IMR-90 (cell line): ENCODE measurements at regions of chr13 and their contacts with region 1.

Region 1: GRCh38 chr13:52128714-52129700 is at the start of gene NEK5:
- DNase-seq: peak; percentile 25
- ATAC-seq: peak; percentile 93
- H3K4me3 ChIP-seq: peak within 1 kb of the TSS; percentile 54
- H3K27ac ChIP-seq: no peak within 1 kb of the TSS
- H3K4me1 ChIP-seq: no peaks in the 10 kb centered on the region
- H3K27me3 ChIP-seq: peaks cover 2% of the 10 kb centered on the region; the same call in 1 of the 2 replicates
- CTCF ChIP-seq: peak; percentile 71
- POLR2A ChIP-seq: no peak
- RAD21 ChIP-seq: peak; percentile 55
- total RNA-seq, gene NEK5: under 0.01 TPM in 1 of 2 replicates, not detected in the other

Region 2: DNA sequence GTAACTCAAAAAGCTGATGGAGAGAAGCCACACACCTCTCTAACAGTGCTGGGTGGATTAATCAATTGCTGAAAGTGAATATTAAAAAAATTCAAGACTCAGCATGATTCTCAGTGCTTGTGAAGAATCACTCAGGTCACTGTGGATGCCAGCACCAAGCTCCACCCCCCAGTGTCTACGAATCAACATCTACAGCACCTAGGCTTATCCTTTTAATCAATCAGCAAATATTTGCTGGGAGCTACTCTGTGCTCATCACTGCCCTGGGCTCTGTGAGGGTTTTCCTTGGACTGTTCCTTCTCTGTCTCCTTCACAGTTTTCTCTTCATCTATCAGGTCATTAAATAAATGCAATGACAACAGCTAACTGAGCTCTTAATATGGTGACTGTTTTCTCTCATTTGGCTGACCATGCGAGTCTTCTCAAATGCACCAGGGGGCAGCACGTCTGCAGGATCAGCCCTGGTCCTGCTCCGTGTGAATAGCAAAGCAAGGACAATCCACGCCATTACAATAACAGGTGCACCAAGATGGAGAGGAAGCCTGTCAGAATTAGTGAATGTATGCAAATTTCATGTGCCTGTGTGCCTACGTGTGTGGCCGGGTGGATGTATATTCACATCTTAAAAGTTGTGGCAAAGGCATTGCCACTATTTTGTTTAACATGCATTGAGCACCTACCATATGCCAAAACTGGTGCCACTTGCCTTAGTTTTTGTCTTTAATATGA is 1003.3 kb before region 1 on chr13:
- CTCF ChIA-PET with region 1: no interaction called
- POLR2A ChIA-PET with region 1: no interaction called
- dilution Hi-C with region 1: no loop called
- in situ Hi-C with region 1: loop called (anchors 25 kb)
- intact Hi-C with region 1: loop called (anchors 1 kb)
- DNase-seq: peak; percentile 54
- ATAC-seq: peak; percentile 90
- H3K4me3 ChIP-seq: no peak overlapping the region
- H3K27ac ChIP-seq: no peak overlapping the region
- H3K4me1 ChIP-seq: no peaks in the 10 kb centered on the region
- H3K27me3 ChIP-seq: peaks cover 2% of the 10 kb centered on the region; the same call in 1 of the 2 replicates
- CTCF ChIP-seq: peak; percentile 72
- POLR2A ChIP-seq: no peak
- RAD21 ChIP-seq: peak; percentile 77

Region 3: GRCh38 chr13:51425410-51426042 is 703.5 kb before region 1 on chr13:
- CTCF ChIA-PET with region 1: no interaction called
- POLR2A ChIA-PET with region 1: no interaction called
- dilution Hi-C with region 1: no loop called
- in situ Hi-C with region 1: loop called (anchors 25 kb)
- intact Hi-C with region 1: loop called (anchors 5 kb)
- DNase-seq: peak; percentile 60
- ATAC-seq: peak; percentile 72
- H3K4me3 ChIP-seq: no peak overlapping the region
- H3K27ac ChIP-seq: no peak overlapping the region
- H3K4me1 ChIP-seq: peaks cover 2% of the 10 kb centered on the region
- H3K27me3 ChIP-seq: no peaks in the 10 kb centered on the region
- CTCF ChIP-seq: no peak
- POLR2A ChIP-seq: no peak
- RAD21 ChIP-seq: no peak

Region 4: DNA sequence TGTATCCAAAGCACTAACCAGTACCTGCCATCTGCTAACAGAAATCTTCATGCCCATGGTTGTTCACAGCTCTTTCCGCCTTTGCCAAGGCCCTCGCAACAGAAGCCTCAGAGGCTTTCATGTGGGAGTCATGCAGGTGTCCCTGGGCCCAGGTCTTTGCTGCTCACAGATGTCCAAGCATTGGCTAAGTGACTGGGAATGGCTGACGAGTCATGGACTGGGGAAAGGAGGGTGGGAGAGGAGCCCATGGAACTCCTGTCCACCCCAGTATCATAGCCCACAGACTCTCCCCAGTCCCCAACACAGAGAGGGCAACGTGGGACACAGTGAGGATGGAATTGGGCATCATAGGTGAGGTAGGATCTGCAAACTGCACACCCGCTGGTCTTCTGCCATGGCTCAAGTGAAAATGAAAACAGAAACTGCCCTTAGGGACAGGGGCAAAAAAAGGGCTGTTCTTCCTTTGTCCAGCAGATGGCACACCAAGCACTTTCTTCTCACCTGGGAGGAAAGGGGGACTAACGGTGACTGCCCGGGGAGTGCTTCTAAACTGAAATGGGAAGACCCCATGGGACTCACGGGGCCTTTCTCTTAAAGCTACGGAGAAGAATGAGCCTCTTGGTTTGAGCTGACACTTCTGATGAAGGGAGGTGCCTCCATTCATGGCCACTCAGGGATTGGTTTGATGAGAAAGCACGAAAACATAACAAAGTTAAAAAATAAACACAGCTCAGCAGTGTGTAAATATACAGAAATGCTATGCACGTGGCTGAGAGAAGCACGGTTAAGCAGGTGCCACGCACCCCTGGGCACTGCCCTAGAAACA is 314.0 kb before region 1 on chr13:
- CTCF ChIA-PET with region 1: interaction called, 6 read pairs
- POLR2A ChIA-PET with region 1: no interaction called
- dilution Hi-C with region 1: no loop called
- in situ Hi-C with region 1: loop called (anchors 10 kb)
- intact Hi-C with region 1: loop called (anchors 1 kb)
- DNase-seq: peak; percentile 50
- ATAC-seq: peak; percentile 86
- H3K4me3 ChIP-seq: peak overlapping the region; percentile 30
- H3K27ac ChIP-seq: no peak overlapping the region
- H3K4me1 ChIP-seq: no peaks in the 10 kb centered on the region
- H3K27me3 ChIP-seq: peaks cover 40% of the 10 kb centered on the region
- CTCF ChIP-seq: peak; percentile 79
- POLR2A ChIP-seq: no peak
- RAD21 ChIP-seq: peak; percentile 64

Region 5: GRCh38 chr13:51844862-51845573 is 284.0 kb before region 1 on chr13 and contains the start of gene TMEM272:
- CTCF ChIA-PET with region 1: no interaction called
- POLR2A ChIA-PET with region 1: no interaction called
- dilution Hi-C with region 1: no loop called
- in situ Hi-C with region 1: no loop called
- intact Hi-C with region 1: loop called (anchors 1 kb)
- DNase-seq: peak; percentile 11
- ATAC-seq: peak; percentile 95
- H3K4me3 ChIP-seq: no peak within 1 kb of the TSS
- H3K27ac ChIP-seq: no peak within 1 kb of the TSS
- H3K4me1 ChIP-seq: peaks cover 2% of the 10 kb centered on the region
- H3K27me3 ChIP-seq: peaks cover 28% of the 10 kb centered on the region
- CTCF ChIP-seq: peak; percentile 65
- POLR2A ChIP-seq: no peak
- RAD21 ChIP-seq: peak; percentile 44
- total RNA-seq, gene TMEM272: not detected in 2 replicates

Region 6: DNA sequence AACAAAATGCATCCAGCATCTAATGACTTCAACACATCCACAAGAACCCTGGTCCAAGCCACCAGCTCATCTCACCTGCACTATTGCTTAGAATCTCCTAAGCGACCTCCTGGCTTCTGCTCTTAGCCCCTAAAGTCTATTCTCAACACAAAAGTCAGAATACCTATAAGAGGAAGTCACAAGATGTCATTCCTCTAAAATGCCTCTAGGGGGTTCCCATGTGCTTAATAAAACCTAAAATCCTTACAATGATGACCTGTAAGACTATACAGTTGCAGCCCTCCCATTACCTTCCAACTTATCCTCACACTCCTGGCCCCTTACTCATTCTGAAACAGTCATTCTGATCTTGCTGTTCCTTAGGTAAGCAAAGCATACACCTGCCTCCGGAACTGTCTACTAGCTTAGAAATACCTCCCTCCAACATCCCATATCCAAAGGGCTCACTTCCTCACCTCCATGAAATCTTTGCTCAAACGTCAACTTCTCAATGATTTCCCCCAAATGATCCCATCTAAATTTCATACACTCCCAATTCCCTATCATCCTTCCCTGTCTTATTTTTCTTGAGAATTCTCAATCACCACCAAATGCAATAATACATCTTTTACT is 127.8 kb before region 1 on chr13:
- CTCF ChIA-PET with region 1: no interaction called
- POLR2A ChIA-PET with region 1: no interaction called
- dilution Hi-C with region 1: no loop called
- in situ Hi-C with region 1: loop called (anchors 5 kb)
- intact Hi-C with region 1: loop called (anchors 1 kb)
- DNase-seq: peak; percentile 49
- ATAC-seq: peak; percentile 75
- H3K4me3 ChIP-seq: no peak overlapping the region
- H3K27ac ChIP-seq: no peak overlapping the region
- H3K4me1 ChIP-seq: peaks cover 12% of the 10 kb centered on the region
- H3K27me3 ChIP-seq: peaks cover 32% of the 10 kb centered on the region
- CTCF ChIP-seq: peak; percentile 63
- POLR2A ChIP-seq: no peak
- RAD21 ChIP-seq: peak; percentile 52